PC-9 (cell line): ENCODE measurements at regions of chr5 and their contacts with region 1.

Region 1: GRCh38 chr5:40798012-40798855 is at the start of gene PRKAA1:
- DNase-seq: peak; percentile 76 to 99
- H3K4me3 ChIP-seq: peak within 1 kb of the TSS; percentile 99
- H3K27ac ChIP-seq: peak within 1 kb of the TSS; percentile 72
- H3K4me1 ChIP-seq: peaks cover 29% of the 10 kb centered on the region
- H3K27me3 ChIP-seq: no peaks in the 10 kb centered on the region
- CTCF ChIP-seq: peak; percentile 72
- total RNA-seq, gene PRKAA1: 155 and 178 TPM in 2 replicates

Region 2: GRCh38 chr5:40634154-40634553 is 164.1 kb before region 1 on chr5:
- CTCF ChIA-PET with region 1: no interaction called
- POLR2A ChIA-PET with region 1: no interaction called
- intact Hi-C with region 1: no loop called
- DNase-seq: no peak
- H3K4me3 ChIP-seq: no peak overlapping the region
- H3K27ac ChIP-seq: no peak overlapping the region
- H3K4me1 ChIP-seq: no peaks in the 10 kb centered on the region
- H3K27me3 ChIP-seq: no peaks in the 10 kb centered on the region
- CTCF ChIP-seq: no peak

Region 3: DNA sequence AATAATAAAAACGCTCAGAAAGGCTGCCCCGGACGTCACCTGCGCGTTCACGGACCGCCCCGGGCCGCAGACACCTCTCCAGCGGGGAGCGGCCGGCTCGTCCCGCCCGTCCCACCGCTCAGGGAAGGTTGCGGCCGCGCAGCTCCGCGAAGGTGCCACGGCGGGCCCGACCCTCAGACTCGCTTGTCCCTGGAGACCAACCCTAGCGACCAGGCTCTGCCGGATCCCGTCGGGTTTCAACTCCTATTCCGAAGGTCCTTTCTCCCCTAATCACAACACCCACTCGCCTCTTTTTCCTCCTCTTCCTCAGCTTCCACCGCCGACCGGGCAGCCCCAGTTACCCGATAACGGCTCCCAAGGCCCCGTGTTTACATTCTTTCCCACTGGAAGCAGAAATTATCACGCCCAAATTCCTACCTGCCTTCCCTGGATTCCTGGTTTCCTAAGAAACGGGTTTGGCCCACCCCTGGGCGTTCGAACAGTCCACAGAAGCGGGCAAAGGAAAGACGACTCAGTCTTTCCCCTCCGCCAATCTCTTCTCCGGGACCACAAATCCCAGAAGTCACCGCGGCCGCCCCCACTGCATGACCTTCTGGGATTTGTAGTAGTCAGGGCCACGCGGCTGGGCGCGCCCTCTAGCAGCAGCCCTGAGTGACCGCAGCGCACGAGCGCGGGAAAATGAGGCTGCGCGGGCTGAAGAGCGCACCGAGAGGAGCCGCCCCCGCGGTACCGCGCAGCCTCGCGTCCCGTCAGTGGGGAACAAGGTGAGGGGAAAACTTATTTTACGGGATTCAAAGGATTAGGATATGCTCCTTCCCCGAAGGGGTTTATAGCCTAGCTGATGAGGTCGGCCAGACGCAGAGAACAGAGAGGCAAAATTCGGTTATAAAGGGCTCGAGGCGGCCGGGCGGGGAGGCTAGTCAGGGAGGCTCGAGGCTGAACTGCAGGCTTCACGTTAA is 42.5 kb before region 1 on chr5 and contains the start of gene TTC33:
- CTCF ChIA-PET with region 1: no interaction called
- POLR2A ChIA-PET with region 1: no interaction called
- intact Hi-C with region 1: loop called (anchors 1 kb)
- DNase-seq: peak; percentile 90 to 99
- H3K4me3 ChIP-seq: peak within 1 kb of the TSS; percentile 79
- H3K27ac ChIP-seq: peak within 1 kb of the TSS; percentile 36
- H3K4me1 ChIP-seq: peaks cover 11% of the 10 kb centered on the region
- H3K27me3 ChIP-seq: no peaks in the 10 kb centered on the region
- CTCF ChIP-seq: peak; percentile 76
- total RNA-seq, gene TTC33: 29.4 and 30.2 TPM in 2 replicates

Region 4: DNA sequence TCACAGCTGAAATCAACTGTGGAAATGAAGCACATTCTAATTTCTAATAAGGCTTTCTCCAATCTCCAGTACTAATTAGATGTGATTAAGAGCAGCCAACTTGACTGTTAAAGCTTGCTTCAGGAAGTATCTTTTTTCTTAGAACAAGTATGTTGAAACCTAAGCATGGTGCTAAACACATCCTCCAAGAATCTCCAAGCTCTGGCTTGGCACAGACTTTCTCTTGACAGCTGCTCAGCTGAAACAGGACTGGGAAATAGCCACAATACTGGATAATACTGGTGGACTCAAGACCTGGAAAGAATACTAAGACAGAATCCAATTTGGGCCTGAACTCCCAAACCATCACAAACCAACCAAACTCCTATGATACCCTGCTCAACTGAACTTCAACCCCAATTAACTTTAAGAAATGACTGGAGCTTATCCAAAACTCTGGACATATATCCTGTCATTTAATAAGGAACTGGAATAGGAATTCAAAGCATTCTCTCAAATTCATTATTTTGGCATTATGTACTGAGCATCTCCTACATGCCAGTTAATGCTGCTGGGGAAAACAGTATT is 16.3 kb before region 1 on chr5:
- CTCF ChIA-PET with region 1: interaction called, 16 read pairs
- POLR2A ChIA-PET with region 1: interaction called, 3 read pairs
- intact Hi-C with region 1: no loop called
- DNase-seq: no peak
- H3K4me3 ChIP-seq: no peak overlapping the region
- H3K27ac ChIP-seq: no peak overlapping the region
- H3K4me1 ChIP-seq: peaks cover 19% of the 10 kb centered on the region; the same call in 1 of the 2 replicates
- H3K27me3 ChIP-seq: no peaks in the 10 kb centered on the region
- CTCF ChIP-seq: no peak

Region 5: DNA sequence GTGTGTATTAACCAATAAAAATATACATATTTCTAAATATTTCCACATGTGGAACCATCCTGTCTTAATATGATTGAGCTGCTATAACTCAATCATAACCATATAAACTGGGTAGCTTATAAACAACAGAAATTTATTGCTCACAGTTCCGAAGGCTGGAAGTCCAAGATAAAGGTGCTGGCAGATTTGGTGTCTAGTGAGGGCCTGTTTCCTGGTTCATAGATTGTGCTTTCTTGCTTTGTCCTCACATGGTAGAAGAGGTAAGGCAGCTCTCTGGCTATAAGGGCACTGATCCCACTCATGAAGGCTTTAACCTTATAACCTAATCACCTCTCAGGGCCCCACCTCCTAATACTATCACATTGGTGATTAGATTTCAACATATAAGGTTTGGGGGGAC is 13.9 kb after region 1 on chr5:
- CTCF ChIA-PET with region 1: interaction called, 3 read pairs
- POLR2A ChIA-PET with region 1: interaction called, 16 read pairs
- intact Hi-C with region 1: no loop called
- DNase-seq: no peak
- H3K4me3 ChIP-seq: no peak overlapping the region
- H3K27ac ChIP-seq: no peak overlapping the region
- H3K4me1 ChIP-seq: 0 out of 2 replicates have a peak, but pooled peaks cover 8% of the 10 kb centered on the region
- H3K27me3 ChIP-seq: no peaks in the 10 kb centered on the region
- CTCF ChIP-seq: no peak

Region 6: DNA sequence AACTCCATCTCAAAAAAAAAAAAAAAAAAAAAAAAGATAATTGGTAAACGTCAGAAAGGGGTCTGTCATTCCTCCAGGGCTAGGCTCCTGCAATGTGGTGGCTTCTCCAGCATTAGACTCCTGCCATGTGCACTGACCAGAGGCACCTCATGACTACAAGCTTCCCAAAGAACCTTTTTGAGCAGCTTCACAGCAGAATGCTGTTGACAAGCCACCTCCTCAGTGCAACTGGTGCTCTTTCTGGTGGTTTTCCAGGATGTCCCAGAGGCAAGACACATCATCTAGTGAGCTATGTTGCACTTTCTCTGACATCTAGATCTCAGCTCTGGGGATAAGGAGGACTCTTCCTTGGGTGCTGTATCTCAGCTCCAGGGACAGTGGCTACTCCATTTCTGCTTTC is 25.2 kb after region 1 on chr5:
- CTCF ChIA-PET with region 1: interaction called, 16 read pairs
- POLR2A ChIA-PET with region 1: interaction called, 7 read pairs
- intact Hi-C with region 1: no loop called
- DNase-seq: no peak
- H3K4me3 ChIP-seq: no peak overlapping the region
- H3K27ac ChIP-seq: 0 out of 2 replicates have a peak overlapping the region, but pooled peaks have one; percentile 4
- H3K4me1 ChIP-seq: no peaks in the 10 kb centered on the region
- H3K27me3 ChIP-seq: no peaks in the 10 kb centered on the region
- CTCF ChIP-seq: no peak

Region 7: GRCh38 chr5:40834849-40835787 is 36.9 kb after region 1 on chr5 and contains the start of gene RPL37:
- CTCF ChIA-PET with region 1: interaction called, 20 read pairs
- POLR2A ChIA-PET with region 1: interaction called, 24 read pairs
- intact Hi-C with region 1: loop called (anchors 1 kb)
- DNase-seq: peak; percentile 97 to 100
- H3K4me3 ChIP-seq: peak within 1 kb of the TSS; percentile 86
- H3K27ac ChIP-seq: peak within 1 kb of the TSS; percentile 96
- H3K4me1 ChIP-seq: peaks cover 43% of the 10 kb centered on the region
- H3K27me3 ChIP-seq: no peaks in the 10 kb centered on the region
- CTCF ChIP-seq: no peak
- total RNA-seq, gene RPL37: 3,889 and 3,938 TPM in 2 replicates